Pancreas (tissue), 10 donors: ENCODE measurements at regions of chrX and their contacts with region 1.

Region 1: DNA sequence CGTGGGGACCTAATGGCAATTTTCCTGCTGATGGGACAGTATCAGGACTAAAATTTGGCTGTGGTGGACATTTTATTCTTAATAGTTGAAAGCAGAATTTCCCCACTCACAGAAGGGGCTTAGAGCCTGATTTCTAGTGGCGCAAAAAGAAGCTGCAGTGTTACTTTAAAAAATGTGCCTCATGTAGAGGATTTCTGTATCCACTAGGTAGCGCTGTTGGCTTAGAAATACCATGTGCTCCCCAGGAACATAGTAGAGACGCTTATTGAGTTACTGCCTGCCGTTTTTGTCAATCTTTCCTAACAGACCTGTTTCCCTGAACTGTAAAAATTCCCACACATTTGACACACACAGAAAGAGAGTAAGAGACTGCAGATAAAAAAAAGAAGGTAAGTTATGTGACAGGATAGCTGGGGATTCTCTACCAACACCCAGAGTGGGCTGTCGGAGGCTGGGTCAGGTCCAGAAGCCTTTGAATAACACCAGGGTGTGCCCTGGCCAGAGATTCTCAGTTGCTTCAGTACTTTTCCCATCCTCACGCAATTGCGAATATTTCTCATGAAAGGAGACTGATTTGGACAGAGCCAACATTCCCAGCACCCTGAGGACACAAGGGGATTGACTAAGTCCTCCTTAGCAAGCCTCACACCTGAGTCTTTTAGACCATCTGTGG is 88.4 kb downstream of the ZXDA start:
- DNase-seq: peak in 3 of 6 donors; percentile 7 to 40 (median 17)
- ATAC-seq: peak; percentile 88 to 98 (median 96)
- H3K4me3 ChIP-seq: peak overlapping the region in 2 of 4 donors; percentile 14 to 30
- H3K27ac ChIP-seq: no peak overlapping the region
- H3K4me1 ChIP-seq: no peaks in the 10 kb centered on the region
- H3K27me3 ChIP-seq: no peaks in the 10 kb centered on the region
- CTCF ChIP-seq: peak; percentile 28 to 54 (median 42)

Region 2: DNA sequence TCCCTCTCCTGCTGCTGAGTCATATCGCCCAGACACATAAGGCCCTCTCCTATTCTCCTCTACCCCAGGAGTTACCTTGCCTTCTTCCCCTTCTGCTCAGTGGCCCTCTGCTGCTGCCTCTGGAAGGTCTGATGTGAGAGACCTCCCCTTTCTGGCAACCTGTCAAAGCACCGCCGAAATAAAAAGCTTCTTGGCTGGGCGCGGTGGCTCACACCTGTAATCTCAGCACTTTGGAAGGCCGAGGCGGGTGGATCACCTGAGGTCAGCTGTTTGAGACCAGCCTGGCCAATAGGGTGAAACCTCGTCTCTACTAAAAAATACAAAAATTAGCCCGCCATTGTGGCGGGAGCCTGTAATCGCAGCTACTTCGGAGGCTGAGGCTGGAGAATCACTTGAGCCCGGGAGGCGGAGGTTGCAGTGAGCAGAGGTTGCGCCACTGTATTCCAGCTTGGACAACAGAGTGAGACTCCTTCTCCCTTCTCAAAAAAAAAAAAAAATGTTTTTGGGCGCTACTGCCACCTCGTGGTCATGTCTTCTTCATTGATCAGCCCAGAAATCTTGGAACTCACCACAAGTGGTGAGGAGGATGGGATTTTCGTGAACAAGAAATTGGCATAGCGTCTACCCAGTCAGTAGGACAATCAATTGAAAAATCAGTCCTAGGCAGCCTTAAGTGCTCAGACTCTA is 97.1 kb after region 1 on chrX:
- intact Hi-C with region 1: loop called in 2 of 3 experiments (anchors 5 kb)
- DNase-seq: peak in 5 of 6 donors; percentile 21 to 43 (median 36)
- ATAC-seq: peak; percentile 83 to 93 (median 90)
- H3K4me3 ChIP-seq: peak overlapping the region in 2 of 4 donors; percentile 7 to 8
- H3K27ac ChIP-seq: no peak overlapping the region
- H3K4me1 ChIP-seq: no peaks in the 10 kb centered on the region
- H3K27me3 ChIP-seq: no peaks in the 10 kb centered on the region
- CTCF ChIP-seq: peak in 3 of 4 donors; percentile 34 to 46 (median 39)

Region 3: DNA sequence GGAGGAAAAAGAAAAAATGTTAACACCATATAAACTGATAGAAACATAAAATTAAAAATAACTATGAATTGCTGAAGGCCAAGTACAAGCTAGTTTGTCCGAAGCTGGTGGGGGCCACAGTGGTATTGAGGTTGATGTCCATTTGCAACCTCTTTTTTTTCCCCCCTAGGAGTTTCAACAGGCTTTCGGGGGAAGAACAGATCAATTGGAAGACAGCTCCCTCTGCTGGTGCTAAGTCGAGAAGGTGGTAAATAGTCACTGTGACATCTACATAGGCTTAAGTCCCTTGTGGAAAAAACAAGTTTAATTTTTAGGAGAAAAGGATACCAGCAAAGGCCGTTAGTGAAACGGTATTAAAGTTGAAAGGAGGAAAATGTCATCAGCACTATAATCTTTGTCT is 204.1 kb after region 1 on chrX:
- intact Hi-C with region 1: loop called in 1 of 3 experiments (anchors 5 kb)
- DNase-seq: peak in 1 of 6 donors; percentile 30
- ATAC-seq: peak in 2 of 4 donors; percentile 53 to 67
- H3K4me3 ChIP-seq: no peak overlapping the region
- H3K27ac ChIP-seq: no peak overlapping the region
- H3K4me1 ChIP-seq: no peaks in the 10 kb centered on the region
- H3K27me3 ChIP-seq: no peaks in the 10 kb centered on the region
- CTCF ChIP-seq: peak in 3 of 4 donors; percentile 15 to 35 (median 33)